ENCODE measurements at regions of chr1 and their contacts with region 1.

Region 1: DNA sequence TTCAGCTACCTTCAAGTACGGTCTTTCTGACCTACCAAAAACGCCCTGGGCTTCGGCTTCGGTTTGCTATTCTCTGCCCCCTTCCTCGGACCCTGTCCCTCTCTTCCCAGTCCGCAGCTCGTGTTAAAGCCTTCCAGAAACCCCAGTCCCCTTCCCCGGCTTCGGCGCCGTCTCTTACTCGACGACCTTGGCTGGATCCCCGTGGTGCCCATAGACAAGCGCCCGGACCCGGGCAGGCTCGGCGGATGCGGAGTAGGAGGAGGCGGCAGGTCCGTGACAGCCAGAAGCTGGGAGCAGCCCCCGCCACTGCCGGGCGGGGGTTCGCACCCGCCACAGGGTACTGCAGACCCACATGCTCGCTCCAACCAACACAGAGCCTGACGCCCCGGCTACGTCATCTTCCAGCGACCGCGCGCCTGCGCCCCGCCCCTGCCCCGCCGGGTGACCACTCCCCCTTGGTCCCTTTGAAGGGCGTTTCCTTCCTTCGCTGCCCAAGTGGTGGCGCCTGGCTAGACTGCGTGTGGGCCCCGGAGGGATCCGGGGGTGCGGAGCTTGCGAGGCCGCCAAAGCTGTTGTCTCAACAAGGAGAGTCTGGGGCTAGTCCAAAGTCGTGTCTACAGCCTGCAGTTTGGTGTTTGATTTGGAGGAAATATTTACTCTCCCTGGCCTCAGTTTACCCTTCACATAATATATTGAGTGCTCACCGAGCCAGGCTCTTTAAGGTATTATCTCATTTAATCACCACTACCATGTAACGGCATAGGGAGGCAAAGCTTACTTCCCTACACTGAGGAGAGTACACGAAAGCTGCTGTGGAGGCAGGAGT is at the start of gene MECR:
- DNase-seq: peak; percentile 92
- H3K4me3 ChIP-seq: peak within 1 kb of the TSS; percentile 90
- CTCF ChIP-seq: no peak

Region 2: GRCh38 chr1:29379443-29380073 is 148.8 kb after region 1 on chr1:
- in situ Hi-C with region 1: loop called (anchors 25 kb)
- DNase-seq: peak; percentile 69
- H3K4me3 ChIP-seq: no peak overlapping the region
- CTCF ChIP-seq: peak; percentile 73

Region 3: DNA sequence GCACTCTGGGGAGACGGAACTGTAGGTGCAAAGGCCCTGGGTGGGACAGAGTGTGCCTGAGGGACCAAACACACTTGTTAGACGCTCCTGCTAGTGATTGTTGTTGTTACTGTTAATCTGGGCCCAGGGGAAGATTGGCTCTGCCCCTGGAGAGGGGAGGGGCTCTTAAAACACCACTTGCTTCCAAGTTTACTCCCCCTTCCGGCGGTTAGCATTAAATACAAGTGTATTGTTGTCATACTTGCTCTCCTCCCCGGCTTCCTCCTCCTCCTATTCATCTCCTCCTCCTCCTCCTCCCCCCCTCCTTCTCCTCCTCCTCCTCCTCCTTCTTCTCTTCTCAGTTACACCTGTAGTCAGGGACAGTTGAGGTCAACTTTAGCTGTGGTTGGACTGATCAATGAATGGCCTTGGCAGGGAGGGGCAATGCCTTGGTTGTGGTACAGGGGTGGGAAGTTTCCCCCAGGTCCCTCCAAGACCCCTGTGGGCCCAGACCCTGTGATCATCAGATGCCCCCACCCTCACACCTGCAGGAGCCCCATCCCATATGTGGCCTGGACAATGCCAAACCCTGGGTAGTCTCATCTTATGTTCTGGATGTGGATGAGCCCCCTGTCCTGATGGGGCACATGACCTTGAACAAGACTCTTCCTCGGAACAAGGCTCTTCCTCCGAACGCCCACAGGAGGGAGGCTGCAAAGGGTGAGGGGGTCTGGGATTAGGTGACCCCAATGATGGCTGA is 222.9 kb after region 1 on chr1:
- in situ Hi-C with region 1: no loop called
- DNase-seq: peak; percentile 12
- H3K4me3 ChIP-seq: no peak overlapping the region
- CTCF ChIP-seq: peak; percentile 36

Region 4: GRCh38 chr1:29703596-29704370 is 473.0 kb after region 1 on chr1:
- in situ Hi-C with region 1: loop called (anchors 25 kb)
- DNase-seq: peak; percentile 53
- H3K4me3 ChIP-seq: no peak overlapping the region
- CTCF ChIP-seq: peak; percentile 89

Region 5: GRCh38 chr1:30911046-30911954 is 1680.5 kb after region 1 on chr1:
- in situ Hi-C with region 1: loop called (anchors 25 kb)
- DNase-seq: peak; percentile 83
- H3K4me3 ChIP-seq: no peak overlapping the region
- CTCF ChIP-seq: peak; percentile 90